CD8-positive, alpha-beta memory T cell (primary cell): ENCODE measurements at regions of chr5 and their contacts with region 1.

Region 1: GRCh38 chr5:96614110-96614691 is 48.0 kb upstream of the CAST start:
- DNase-seq: peak; percentile 7 to 52 (median 31)
- H3K4me3 ChIP-seq: no peak overlapping the region
- H3K4me3 Mint-ChIP-seq: no peak overlapping the region
- H3K27ac ChIP-seq: no peak overlapping the region
- H3K27ac Mint-ChIP-seq: peak overlapping the region in 1 of 8 donors; percentile 2
- H3K4me1 ChIP-seq: peaks cover 3% of the 10 kb centered on the region
- H3K4me1 Mint-ChIP-seq: peaks cover 4 to 6% (median 5%) of the 10 kb centered on the region in 3 donors
- H3K27me3 ChIP-seq: no peaks in the 10 kb centered on the region
- H3K27me3 Mint-ChIP-seq: peaks cover 9 to 24% of the 10 kb centered on the region in 2 donors

Region 2: GRCh38 chr5:96468956-96469355 is 145.2 kb before region 1 on chr5:
- CTCF ChIA-PET with region 1: no interaction called
- POLR2A ChIA-PET with region 1: no interaction called
- DNase-seq: no peak
- H3K4me3 ChIP-seq: no peak overlapping the region
- H3K4me3 Mint-ChIP-seq: no peak overlapping the region
- H3K27ac ChIP-seq: no peak overlapping the region
- H3K27ac Mint-ChIP-seq: no peak overlapping the region
- H3K4me1 ChIP-seq: no peaks in the 10 kb centered on the region
- H3K4me1 Mint-ChIP-seq: no peaks in the 10 kb centered on the region
- H3K27me3 ChIP-seq: no peaks in the 10 kb centered on the region
- H3K27me3 Mint-ChIP-seq: peaks cover 3 to 28% of the 10 kb centered on the region in 2 donors

Region 3: DNA sequence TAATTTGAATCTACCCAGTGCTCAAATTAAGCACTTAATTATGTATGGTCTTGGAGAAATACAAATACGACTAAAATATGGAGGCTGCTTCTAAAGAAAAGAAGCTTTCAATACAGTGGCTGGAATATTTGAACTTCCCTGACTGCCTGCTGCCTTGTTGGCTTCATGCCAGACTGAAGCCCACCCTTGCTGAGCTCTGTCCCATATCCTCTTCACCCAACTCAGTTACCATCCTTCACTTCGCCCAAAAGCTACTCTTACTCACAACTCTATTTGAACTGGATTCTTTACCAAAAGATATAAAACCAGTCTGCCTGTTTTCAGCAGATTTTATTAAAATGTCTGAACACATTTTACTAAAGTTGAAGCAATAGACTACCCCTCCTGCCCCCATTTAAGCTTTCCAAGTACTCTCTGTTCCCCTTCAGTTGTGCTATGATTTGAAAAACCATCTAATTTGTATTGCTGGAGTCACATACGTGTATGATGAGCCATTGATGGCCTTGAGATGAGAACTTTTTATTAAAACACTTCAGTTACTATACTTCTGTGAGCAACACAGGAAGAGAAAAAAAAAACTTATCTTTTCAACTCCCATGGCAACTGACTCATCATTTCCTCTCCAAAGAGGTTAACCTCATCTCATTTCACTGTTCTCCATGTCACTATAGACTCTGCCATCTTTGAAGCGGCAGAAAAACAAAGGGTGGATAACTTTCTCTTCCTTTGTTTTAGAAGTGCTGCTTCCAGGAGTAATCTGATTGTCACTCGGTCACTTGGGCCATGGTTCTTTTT is 77.0 kb before region 1 on chr5:
- CTCF ChIA-PET with region 1: no interaction called
- POLR2A ChIA-PET with region 1: no interaction called
- DNase-seq: peak in 2 of 5 donors; percentile 70 to 73
- H3K4me3 ChIP-seq: peak overlapping the region; percentile 26
- H3K4me3 Mint-ChIP-seq: peak overlapping the region in 6 of 7 donors; percentile 49 to 71 (median 58)
- H3K27ac ChIP-seq: peak overlapping the region; percentile 2
- H3K27ac Mint-ChIP-seq: peak overlapping the region; percentile 61 to 99 (median 91)
- H3K4me1 ChIP-seq: peaks cover 25% of the 10 kb centered on the region
- H3K4me1 Mint-ChIP-seq: peaks cover 30 to 41% (median 38%) of the 10 kb centered on the region in 3 donors
- H3K27me3 ChIP-seq: no peaks in the 10 kb centered on the region
- H3K27me3 Mint-ChIP-seq: no peaks in the 10 kb centered on the region

Region 4: GRCh38 chr5:96582343-96582742 is 31.9 kb before region 1 on chr5:
- CTCF ChIA-PET with region 1: no interaction called
- POLR2A ChIA-PET with region 1: no interaction called
- DNase-seq: no peak
- H3K4me3 ChIP-seq: no peak overlapping the region
- H3K4me3 Mint-ChIP-seq: no peak overlapping the region
- H3K27ac ChIP-seq: no peak overlapping the region
- H3K27ac Mint-ChIP-seq: no peak overlapping the region
- H3K4me1 ChIP-seq: no peaks in the 10 kb centered on the region
- H3K4me1 Mint-ChIP-seq: peaks cover 9 to 12% (median 9%) of the 10 kb centered on the region in 3 donors
- H3K27me3 ChIP-seq: no peaks in the 10 kb centered on the region
- H3K27me3 Mint-ChIP-seq: peaks cover 8 to 54% of the 10 kb centered on the region in 2 donors

Region 5: GRCh38 chr5:96655506-96655905 is 41.3 kb after region 1 on chr5:
- CTCF ChIA-PET with region 1: interaction called, 10 read pairs
- POLR2A ChIA-PET with region 1: no interaction called
- DNase-seq: no peak
- H3K4me3 ChIP-seq: no peak overlapping the region
- H3K4me3 Mint-ChIP-seq: no peak overlapping the region
- H3K27ac ChIP-seq: no peak overlapping the region
- H3K27ac Mint-ChIP-seq: peak overlapping the region in 2 of 8 donors; percentile 0 to 40
- H3K4me1 ChIP-seq: peaks cover 14% of the 10 kb centered on the region
- H3K4me1 Mint-ChIP-seq: peaks cover 38 to 51% (median 40%) of the 10 kb centered on the region in 3 donors
- H3K27me3 ChIP-seq: no peaks in the 10 kb centered on the region
- H3K27me3 Mint-ChIP-seq: peaks cover 0 to 14% of the 10 kb centered on the region in 2 donors

Region 6: DNA sequence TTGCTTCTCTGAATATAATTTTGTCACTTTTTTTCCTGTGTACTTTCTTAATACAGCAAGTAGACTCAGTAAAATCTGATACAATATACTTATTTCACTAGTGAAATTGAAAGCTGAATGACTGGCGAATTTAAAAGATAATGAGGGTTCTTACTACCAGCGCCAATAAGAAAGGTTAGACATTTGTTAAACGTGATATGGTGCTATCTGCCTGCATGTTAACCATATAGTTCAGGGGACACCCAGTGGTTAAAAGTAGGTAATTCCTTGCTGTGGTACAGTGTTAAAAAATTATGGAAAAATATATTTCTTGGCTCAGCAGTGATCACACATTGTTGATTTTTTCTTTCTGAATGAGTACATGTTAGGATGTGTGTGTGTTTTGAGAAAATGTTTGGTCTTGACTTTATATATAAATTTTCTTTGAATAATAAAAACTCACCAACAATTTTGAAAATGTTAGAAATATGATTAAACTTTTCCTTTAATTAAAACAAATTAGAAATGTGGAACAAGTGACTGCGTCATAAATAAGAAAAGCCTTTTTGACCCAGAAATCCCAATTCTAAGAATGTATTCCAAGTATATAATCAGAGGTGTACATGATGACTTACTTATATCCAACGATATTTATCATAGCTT is 73.7 kb after region 1 on chr5:
- CTCF ChIA-PET with region 1: interaction called, 16 read pairs
- POLR2A ChIA-PET with region 1: no interaction called
- DNase-seq: peak in 1 of 5 donors; percentile 24
- H3K4me3 ChIP-seq: no peak overlapping the region
- H3K4me3 Mint-ChIP-seq: peak overlapping the region in 1 of 7 donors; percentile 42
- H3K27ac ChIP-seq: no peak overlapping the region
- H3K27ac Mint-ChIP-seq: no peak overlapping the region
- H3K4me1 ChIP-seq: no peaks in the 10 kb centered on the region
- H3K4me1 Mint-ChIP-seq: peaks cover 32 to 54% (median 44%) of the 10 kb centered on the region in 3 donors
- H3K27me3 ChIP-seq: no peaks in the 10 kb centered on the region
- H3K27me3 Mint-ChIP-seq: no peaks in the 10 kb centered on the region

Region 7: GRCh38 chr5:96752341-96753016 is 138.3 kb after region 1 on chr5:
- CTCF ChIA-PET with region 1: interaction called, 11 read pairs
- POLR2A ChIA-PET with region 1: no interaction called
- DNase-seq: peak in 3 of 5 donors; percentile 29 to 61 (median 45)
- H3K4me3 ChIP-seq: no peak overlapping the region
- H3K4me3 Mint-ChIP-seq: no peak overlapping the region
- H3K27ac ChIP-seq: no peak overlapping the region
- H3K27ac Mint-ChIP-seq: peak overlapping the region in 3 of 8 donors; percentile 6 to 80 (median 15)
- H3K4me1 ChIP-seq: no peaks in the 10 kb centered on the region
- H3K4me1 Mint-ChIP-seq: peaks cover 0 to 5% (median 4%) of the 10 kb centered on the region in 3 donors
- H3K27me3 ChIP-seq: no peaks in the 10 kb centered on the region
- H3K27me3 Mint-ChIP-seq: no peaks in the 10 kb centered on the region